Left cardiac atrium (tissue), 4 donors: ENCODE measurements at regions of chr11 and their contacts with region 1.

Region 1: DNA sequence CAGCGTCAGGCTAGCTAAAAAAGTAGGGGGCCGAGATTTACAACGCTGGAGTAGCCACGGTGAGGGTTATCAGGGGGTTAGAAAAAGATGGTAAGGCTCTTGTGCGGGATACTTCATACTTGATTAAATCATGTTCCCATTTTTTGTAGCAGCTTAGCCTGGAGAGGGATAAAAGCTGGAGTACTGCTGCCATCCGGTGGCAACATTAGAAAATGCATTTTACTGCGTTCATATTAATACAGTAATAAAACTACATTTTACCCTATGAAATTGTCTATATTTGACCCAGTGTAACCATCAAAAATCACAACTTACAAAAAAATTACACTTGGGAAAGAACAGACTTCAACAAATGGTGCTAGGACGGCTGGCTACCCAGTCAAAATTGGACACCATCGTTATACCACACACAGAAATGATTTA is 17.3 kb downstream of the RPUSD4 start:
- DNase-seq: no peak
- ATAC-seq: peak; percentile 60 to 74

Region 2: GRCh38 chr11:125923012-125923579 is 271.0 kb before region 1 on chr11:
- intact Hi-C with region 1: loop called (anchors 1 to 2 kb)
- DNase-seq: peak; percentile 55
- ATAC-seq: peak; percentile 80 to 89

Region 3: DNA sequence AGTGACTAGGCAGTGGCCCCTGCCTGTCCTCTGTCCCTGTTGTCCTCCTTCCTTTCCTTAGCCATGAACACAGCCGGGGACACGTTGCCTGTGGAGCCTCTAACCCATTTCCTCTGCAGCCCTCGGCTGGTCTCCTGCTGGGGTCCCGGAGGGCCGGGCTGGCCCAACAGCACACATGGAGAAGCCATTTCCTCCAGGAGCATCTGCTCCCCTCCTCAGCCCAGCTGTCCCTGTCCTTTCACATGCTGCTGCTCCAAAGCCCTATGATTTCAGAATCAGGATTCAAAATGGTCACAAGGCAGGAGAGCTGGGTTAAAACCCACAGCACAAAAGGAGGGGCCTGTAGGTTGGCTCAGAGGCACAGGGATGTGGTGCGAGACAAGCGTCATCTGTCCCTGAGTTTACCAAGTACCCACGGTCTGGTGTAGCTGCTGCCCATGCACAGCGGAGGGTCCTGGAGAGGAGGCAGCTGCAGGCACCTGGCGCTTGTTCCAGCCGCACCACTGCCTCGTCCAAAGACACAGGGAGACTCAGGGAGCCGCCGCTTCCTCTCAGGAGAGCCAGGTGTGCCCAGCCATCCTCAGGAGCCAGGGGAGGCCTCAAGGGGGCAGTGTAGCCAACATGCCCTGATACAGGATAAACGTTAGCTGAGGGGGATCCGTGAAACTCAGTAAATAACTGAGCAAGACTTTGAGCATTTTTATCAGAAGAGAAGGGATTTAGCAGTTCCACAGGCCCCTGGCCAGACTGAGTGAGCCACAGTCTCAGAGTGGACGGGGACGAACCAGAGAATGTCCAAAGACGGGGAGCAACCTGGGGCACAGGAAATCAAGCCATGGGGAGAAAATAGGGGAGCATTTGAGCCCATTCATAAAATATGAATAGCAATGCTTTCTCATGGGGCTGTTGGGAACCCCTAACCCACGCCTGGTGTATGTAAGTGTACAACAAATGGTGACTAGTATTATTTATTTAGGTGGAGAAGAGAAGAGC is 252.2 kb before region 1 on chr11:
- intact Hi-C with region 1: loop called in 1 of 2 experiments (anchors 5 kb)
- DNase-seq: peak; percentile 58
- ATAC-seq: peak; percentile 58 to 62

Region 4: DNA sequence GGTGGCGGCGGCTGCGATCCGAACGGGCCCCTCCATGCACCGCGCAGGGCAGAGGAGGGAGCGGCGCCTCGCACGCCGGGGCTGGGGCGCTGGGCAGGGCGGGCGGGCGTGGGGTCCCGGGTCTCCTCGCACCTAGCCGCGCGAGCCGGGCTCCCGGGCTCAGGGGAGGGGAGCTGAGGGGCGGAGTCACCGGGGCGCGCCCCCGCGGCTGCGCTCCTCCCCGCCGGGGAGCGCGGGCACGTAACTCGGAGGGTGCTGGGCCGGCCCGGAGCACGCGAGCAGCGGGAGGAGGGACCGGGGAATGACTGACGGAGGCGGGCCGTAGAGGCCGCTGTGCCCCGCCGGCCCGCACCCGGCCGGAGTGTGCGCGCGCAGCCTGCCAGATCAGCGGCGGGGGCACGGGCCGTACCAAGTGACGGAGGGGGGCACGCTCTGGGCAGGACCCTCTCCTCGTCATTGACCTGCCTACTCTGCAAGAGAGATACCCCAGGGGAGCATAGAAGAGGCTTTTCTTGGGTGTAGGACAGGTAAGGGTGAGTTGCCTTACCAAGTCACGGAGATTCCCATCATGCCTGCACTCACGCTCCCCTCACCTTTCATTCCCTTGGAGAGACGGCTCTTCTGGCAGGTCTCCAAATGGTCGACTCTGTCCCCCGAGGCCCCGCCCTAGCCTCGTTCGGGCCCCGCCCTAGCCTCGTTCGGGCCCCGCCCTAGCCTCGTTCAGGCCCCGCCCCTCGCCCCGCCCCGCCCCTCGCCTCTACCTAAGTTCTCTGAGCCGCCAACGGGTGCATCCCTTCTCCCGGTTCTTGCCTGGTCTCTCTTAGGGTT is 131.2 kb before region 1 on chr11 and contains the start of gene CDON:
- intact Hi-C with region 1: loop called in 1 of 2 experiments (anchors 5 kb)
- DNase-seq: peak; percentile 93
- ATAC-seq: peak; percentile 98 to 99
- total RNA-seq, gene CDON: 13.6 to 30.0 TPM